HEK293 (cell line): ENCODE measurements at regions of chr16 and their contacts with region 1.

Region 1: DNA sequence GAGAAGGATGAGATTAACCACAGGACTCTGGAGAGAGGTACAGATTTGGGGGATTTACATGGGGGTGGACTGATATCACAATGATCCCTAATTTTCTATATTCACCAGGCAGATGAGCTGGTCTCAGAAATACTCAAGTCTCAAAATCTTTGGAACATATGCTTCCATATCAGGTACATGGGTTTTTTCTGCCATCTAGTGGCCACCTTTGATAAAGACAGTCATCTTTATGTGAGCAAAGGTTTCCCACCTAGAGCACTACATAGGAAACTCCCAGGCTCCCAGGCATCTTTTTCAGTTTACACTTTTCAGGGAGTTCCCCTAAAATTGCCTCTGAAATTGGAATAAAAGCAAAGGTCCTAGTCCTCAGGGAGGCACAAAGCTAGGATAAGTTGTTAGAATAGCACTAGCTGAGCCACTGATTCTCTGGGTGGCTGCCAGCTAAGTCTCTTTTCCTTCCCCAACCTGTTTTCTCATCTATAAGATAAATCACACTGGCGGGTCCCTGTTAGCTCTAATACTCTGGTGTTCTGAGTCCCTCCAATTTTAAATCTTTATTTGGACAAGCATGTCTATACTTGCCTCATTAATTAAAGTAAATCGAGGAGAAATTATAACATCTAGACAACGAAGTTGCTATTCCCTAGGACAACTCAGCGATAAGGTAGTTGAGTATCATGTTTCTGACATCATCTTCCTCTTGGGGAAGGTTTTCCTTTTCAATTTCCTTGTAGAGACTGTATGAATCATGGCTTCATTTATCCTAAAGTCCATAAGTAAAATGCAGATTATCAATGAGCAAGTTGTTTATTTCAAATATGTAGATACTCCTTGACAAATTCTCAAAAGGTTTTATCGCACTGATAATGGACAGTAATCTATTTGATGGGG is 19.0 kb upstream of the MON1B start:
- H3K4me3 ChIP-seq: no peak overlapping the region
- H3K27ac ChIP-seq: no peak overlapping the region
- H3K4me1 ChIP-seq: no peaks in the 10 kb centered on the region
- CTCF ChIP-seq: 0 out of 2 replicates have a peak, but pooled peaks have one; percentile 20

Region 2: DNA sequence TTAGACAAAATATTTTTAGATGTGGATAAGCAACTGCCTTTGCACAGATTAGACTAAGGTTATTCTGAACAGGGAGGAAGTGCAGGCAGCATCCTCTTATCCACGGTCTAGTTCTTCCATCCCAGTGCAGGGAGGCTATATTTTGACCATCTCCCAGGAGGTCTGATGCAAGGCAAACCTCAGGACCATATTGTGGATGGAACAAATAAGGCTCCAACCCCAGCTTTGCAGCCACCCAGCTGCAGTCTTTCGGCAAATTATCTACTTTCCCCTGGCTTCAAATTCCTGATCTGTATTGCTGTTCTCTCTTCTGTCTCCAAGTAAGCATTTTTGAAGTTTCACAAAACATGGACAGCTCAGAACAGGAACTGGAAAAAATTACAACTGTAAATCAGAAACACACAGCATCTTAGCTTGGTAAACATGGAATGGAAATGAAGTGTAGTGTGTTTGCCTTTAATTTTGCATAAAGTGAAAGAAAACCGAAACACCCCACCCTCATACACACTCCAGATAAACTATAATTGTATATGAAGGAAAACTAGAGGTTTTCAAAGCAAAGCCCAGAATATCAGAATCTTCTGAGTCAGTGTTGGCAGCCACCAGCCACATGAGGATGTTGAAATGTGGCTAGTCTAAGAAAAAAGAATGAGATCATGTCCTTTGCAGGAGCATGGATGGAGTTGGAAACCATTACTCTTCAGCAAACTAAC is 14.5 kb before region 1 on chr16:
- CTCF ChIA-PET with region 1: interaction called, 30 read pairs
- POLR2A ChIA-PET with region 1: no interaction called
- H3K4me3 ChIP-seq: no peak overlapping the region
- H3K27ac ChIP-seq: no peak overlapping the region
- H3K4me1 ChIP-seq: no peaks in the 10 kb centered on the region
- CTCF ChIP-seq: no peak

Region 3: DNA sequence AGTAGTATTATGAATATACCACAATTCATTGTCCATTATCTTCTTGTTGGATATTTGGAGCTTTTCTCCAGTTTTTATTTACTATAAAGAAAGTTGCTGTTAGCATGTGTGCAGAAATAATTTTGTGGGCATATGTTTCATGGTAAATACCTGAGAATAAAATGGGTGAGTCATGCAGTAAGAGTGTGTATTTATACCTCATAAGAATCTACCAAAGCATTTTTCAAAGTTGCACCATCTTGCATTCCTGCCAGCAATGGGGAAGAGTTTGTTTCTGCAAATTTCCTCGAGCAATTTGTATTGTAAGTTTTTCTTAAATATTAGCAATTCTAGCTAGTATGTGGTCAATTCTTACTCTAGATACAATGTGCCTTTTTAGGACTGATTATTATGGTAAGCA is 11.1 kb after region 1 on chr16:
- CTCF ChIA-PET with region 1: interaction called, 25 read pairs
- POLR2A ChIA-PET with region 1: no interaction called
- H3K4me3 ChIP-seq: no peak overlapping the region
- H3K27ac ChIP-seq: no peak overlapping the region
- H3K4me1 ChIP-seq: no peaks in the 10 kb centered on the region
- CTCF ChIP-seq: no peak

Region 4: DNA sequence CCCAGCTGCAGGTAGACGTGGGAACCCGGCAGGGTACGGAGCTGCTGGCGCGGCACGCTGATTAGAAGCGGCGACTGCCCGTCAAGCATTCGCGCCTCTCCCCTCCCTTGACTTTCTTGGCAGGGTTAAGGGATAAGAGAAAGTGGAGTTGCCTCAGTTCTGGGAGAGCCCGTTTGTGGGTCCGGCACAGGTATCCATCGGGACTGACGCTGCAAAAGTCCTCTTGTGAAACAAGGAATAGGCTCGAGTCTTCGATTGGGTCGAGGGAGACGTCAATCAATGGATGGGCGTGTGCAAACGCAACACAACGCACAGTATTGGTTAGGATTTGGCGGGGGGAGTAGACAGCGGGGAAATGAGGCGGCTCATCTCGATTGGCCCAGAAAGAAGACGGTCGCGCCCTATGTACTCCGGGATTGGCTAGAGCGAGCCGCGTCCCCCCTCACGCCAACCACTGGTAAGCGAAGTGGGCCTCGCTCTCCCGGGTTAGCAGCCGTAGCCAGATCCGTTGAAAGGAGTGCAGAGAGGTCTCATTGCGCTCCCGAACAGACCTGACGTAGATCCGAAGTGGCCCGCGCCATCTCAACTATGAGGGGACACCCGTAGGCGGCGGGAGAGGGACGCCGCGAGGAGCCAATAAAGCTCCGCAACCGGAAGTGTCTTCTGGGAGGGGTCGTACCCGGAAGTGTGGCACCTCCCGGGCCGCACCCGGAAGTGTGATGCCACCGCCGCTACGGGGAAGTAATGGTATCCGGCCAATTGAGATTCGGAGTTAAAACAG is 18.7 kb after region 1 on chr16 and contains the start of gene MON1B:
- CTCF ChIA-PET with region 1: interaction called, 15 read pairs
- POLR2A ChIA-PET with region 1: no interaction called
- H3K4me3 ChIP-seq: peak within 1 kb of the TSS; percentile 63
- H3K27ac ChIP-seq: peak within 1 kb of the TSS; percentile 72
- H3K4me1 ChIP-seq: no peaks in the 10 kb centered on the region
- CTCF ChIP-seq: no peak